ENCODE measurements at regions of chr15 and their contacts with region 1.

Region 1: DNA sequence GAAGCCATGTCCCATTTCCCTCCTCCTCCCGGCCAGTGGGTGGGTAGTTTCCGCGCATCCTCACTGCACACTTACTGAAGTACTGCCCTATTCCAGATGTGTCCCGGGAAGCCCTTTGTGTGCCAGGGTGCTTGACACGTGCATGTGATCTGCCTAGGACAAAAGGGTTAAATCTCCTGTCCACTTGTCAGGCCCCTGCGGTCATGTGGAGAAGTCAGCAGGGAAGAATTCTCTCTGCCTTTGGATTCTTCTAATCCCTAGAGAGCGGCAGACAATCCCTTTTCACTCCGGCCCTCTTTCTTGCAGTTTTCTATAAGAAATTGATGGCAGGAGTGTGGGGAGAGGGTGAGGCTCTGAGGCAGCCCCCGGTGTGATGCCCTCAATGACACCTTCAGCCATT is 19.8 kb downstream of the ST8SIA2 start:
- DNase-seq: no peak
- ATAC-seq: no peak
- H3K4me3 ChIP-seq: no peak overlapping the region
- H3K4me3 Mint-ChIP-seq: no peak overlapping the region
- H3K27ac ChIP-seq: no peak overlapping the region
- H3K27ac Mint-ChIP-seq: no peak overlapping the region
- H3K4me1 ChIP-seq: no peaks in the 10 kb centered on the region
- H3K4me1 Mint-ChIP-seq: no peaks in the 10 kb centered on the region
- H3K27me3 ChIP-seq: peaks cover 0 to 5% of the 10 kb centered on the region in 2 experiments
- H3K27me3 Mint-ChIP-seq: peaks cover 22% of the 10 kb centered on the region
- CTCF ChIP-seq: no peak

Region 2: GRCh38 chr15:92443381-92443780 is 29.9 kb after region 1 on chr15:
- CTCF ChIA-PET with region 1: no interaction called
- POLR2A ChIA-PET with region 1: no interaction called
- intact Hi-C with region 1: loop called in 1 of 2 experiments (anchors 1 kb)
- DNase-seq: no peak
- ATAC-seq: no peak
- H3K4me3 ChIP-seq: no peak overlapping the region
- H3K4me3 Mint-ChIP-seq: no peak overlapping the region
- H3K27ac ChIP-seq: no peak overlapping the region
- H3K27ac Mint-ChIP-seq: no peak overlapping the region
- H3K4me1 ChIP-seq: no peaks in the 10 kb centered on the region
- H3K4me1 Mint-ChIP-seq: no peaks in the 10 kb centered on the region
- H3K27me3 ChIP-seq: peaks cover 0 to 2% of the 10 kb centered on the region in 2 experiments
- H3K27me3 Mint-ChIP-seq: no peaks in the 10 kb centered on the region
- CTCF ChIP-seq: no peak